ENCODE measurements at regions of chr11 and their contacts with region 1.

Region 1: GRCh38 chr11:8247312-8247711 is 16.4 kb downstream of the LMO1 start:
- DNase-seq: no peak
- H3K4me3 ChIP-seq: no peak overlapping the region
- CTCF ChIP-seq: peak; percentile 36

Region 2: DNA sequence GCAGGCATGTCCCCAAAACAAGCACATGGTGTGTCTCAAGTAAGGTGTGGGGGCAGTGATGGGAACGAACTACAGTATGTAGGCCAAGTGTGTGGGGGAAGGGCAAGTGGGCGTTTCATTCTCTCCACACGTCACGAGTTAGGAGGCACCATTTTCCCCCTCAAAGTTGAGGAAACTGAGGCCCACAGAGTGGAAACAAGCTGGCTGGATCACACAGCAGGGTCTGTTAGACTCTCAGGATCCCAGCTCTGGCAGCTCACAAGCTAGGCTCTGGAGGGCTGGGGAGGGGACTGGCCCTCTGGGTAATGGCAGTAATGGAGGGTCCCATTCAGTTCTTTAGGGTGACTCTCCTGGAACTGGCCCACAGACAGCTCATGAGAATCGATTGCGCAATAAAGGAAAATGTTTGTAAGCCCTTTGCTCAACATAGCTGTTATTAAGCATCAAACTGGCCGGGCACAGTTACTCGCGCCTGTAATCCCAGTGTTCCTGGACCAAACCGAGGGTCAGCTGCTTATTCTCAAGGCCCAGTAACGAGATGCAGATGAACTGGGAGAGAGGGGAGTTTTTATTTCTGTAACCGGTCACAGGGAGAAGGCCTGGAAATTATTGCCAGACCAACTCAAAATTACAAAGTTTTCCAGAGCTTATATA is 190.4 kb before region 1 on chr11:
- CTCF ChIA-PET with region 1: no interaction called
- POLR2A ChIA-PET with region 1: no interaction called
- DNase-seq: peak; percentile 29
- H3K4me3 ChIP-seq: no peak overlapping the region
- CTCF ChIP-seq: no peak

Region 3: DNA sequence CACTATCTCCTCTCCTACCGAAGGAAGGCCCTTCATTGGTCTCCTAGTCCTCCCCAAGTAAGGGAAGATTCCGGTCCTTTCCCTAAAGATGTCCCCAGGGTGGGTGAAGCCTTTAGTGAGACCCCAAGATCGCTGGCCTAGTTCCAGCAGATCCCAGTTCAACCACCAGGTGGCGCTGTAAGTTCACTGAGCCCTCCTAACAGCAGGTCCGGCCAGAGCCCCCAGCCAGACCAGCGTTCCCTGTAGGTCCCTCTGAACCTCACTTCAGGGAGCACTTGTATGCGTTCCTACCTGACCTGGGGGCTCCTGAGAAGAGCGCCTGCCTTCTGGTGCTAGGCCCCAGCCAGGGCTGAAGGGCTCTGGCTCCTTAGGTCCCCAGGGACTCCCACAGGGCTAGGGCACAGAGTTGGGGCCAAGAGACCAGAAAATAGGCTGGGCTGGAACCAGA is 21.7 kb before region 1 on chr11:
- CTCF ChIA-PET with region 1: interaction called, 11 read pairs
- POLR2A ChIA-PET with region 1: no interaction called
- DNase-seq: no peak
- H3K4me3 ChIP-seq: no peak overlapping the region
- CTCF ChIP-seq: peak; percentile 83

Region 4: DNA sequence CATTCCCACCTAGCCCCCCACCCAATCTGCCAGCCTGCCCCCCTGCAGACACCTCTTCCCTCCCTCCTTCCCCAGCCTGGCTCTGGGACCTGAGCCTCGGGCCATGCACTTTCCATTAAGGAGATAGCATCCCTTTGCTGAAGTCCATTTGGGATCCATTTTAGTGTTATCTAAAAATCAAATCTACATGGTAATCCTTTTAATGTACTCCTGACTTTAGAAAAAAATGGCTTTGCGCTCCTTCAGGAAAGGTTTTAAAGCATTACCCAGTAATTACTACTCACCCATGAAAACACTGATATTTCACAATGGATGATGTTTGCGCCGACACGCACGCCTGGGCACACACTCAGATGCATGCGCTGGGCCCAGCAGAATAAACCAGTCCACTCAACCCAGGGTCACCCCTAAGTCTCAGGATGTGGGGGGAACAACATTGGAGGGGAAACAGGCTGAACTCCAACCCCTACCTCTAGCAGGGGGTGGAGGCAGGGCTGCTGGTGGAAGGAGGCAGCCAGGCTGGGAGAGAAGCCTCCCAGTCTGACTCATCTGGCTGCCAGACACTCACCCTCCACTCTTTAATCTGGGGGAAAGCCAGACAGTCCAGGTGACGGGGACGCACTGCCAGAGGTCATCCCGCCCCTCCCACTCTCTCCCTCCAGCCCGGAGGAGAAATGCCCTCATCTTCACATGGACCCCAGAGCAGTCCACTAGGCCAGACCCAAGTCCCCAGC is 13.5 kb before region 1 on chr11:
- CTCF ChIA-PET with region 1: interaction called, 12 read pairs
- POLR2A ChIA-PET with region 1: no interaction called
- DNase-seq: no peak
- H3K4me3 ChIP-seq: no peak overlapping the region
- CTCF ChIP-seq: no peak

Measured in AG04449 (cell line).